IMR-90 (cell line): ENCODE measurements at regions of chr4 and their contacts with region 1.

Region 1: GRCh38 chr4:150010525-150011126 is 67.6 kb upstream of the DCLK2 start:
- DNase-seq: peak; percentile 72
- ATAC-seq: peak; percentile 77
- H3K4me3 ChIP-seq: no peak overlapping the region
- H3K27ac ChIP-seq: no peak overlapping the region
- H3K4me1 ChIP-seq: peaks cover 12% of the 10 kb centered on the region
- H3K27me3 ChIP-seq: no peaks in the 10 kb centered on the region
- CTCF ChIP-seq: peak; percentile 57
- POLR2A ChIP-seq: no peak
- RAD21 ChIP-seq: peak; percentile 66

Region 2: DNA sequence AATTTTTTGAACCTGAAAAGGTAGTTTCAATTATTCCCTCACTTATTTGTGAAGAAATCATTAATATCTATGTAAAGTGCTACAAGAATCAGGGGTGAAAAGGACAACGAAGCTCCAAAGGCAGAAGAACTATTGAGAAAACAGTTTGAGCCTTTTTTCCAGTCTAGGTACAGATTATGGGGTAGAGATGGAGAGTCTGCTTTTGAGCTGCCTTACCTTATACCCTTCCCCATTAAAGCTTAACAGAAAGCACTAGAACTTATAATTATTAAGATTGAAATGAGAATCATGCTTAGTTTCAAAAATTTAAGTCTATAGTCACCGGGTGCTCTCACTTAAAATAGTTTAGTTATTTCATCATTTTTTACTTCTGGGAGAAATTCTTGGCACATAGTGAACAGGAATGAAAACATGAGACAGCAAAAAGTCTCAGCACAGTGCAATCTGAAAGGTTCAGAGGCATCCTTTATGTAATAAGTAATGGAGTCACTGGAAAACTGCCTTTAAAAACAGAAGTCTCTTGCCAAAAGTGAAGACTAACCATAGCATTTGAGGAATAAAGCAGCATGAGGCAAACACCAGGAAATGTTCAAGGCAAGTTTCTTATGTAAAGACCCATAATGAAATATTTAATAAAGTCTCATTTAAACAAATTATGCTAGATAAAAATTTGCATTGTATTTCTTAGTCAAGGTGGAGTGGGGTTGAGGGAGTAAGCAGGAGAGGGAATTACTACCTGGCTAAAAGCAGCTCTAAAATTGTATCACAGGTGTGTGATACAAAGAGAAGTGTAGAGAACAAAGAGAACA is 62.5 kb after region 1 on chr4:
- CTCF ChIA-PET with region 1: no interaction called
- POLR2A ChIA-PET with region 1: no interaction called
- dilution Hi-C with region 1: no loop called
- in situ Hi-C with region 1: loop called (anchors 5 kb)
- intact Hi-C with region 1: loop called (anchors 5 kb)
- DNase-seq: peak; percentile 97
- ATAC-seq: peak; percentile 53
- H3K4me3 ChIP-seq: no peak overlapping the region
- H3K27ac ChIP-seq: peak overlapping the region; percentile 61; the same call in 1 of the 2 replicates
- H3K4me1 ChIP-seq: peaks cover 5% of the 10 kb centered on the region; the same call in 1 of the 2 replicates
- H3K27me3 ChIP-seq: no peaks in the 10 kb centered on the region
- CTCF ChIP-seq: no peak
- POLR2A ChIP-seq: no peak
- RAD21 ChIP-seq: no peak

Region 3: DNA sequence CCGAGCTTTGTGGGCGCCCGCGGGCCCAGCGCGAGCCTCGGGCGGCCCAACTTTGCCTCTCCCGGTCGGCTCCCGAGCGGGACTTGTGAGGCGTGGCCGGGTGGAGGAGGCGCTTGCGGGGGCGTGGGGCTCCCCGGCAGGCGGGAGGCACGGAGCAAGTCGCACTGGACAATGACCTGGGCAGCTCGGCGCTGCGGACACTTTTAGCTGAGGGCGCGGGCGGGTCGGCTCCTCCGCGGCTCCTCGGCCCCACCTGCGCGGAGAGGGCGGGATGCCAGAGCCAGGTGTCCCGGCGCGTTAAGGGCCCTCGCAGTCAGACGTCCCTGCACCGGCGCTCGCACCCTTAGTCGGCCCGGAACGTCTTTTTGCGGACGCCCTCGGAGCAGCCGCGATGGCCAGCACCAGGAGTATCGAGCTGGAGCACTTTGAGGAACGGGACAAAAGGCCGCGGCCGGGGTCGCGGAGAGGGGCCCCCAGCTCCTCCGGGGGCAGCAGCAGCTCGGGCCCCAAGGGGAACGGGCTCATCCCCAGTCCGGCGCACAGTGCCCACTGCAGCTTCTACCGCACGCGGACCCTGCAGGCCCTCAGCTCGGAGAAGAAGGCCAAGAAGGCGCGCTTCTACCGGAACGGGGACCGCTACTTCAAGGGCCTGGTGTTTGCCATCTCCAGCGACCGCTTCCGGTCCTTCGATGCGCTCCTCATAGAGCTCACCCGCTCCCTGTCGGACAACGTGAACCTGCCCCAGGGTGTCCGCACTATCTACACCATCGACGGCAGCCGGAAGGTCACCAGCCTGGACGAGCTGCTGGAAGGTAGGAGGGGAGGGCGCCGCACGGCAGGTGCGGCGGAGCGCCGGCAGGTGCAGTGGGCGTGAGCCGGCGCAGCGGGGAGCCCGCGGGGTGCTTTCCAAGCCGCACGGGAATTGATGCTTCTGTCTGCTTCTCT is 68.3 kb after region 1 on chr4:
- CTCF ChIA-PET with region 1: no interaction called
- POLR2A ChIA-PET with region 1: no interaction called
- dilution Hi-C with region 1: no loop called
- in situ Hi-C with region 1: loop called (anchors 5 kb)
- intact Hi-C with region 1: loop called (anchors 5 kb)
- DNase-seq: peak; percentile 46
- ATAC-seq: peak; percentile 75
- H3K4me3 ChIP-seq: peak overlapping the region; percentile 78
- H3K27ac ChIP-seq: peak overlapping the region; percentile 69
- H3K4me1 ChIP-seq: no peaks in the 10 kb centered on the region
- H3K27me3 ChIP-seq: no peaks in the 10 kb centered on the region
- CTCF ChIP-seq: 0 out of 2 replicates have a peak, but pooled peaks have one; percentile 14
- POLR2A ChIP-seq: no peak
- RAD21 ChIP-seq: peak; percentile 9; the same call in 1 of the 2 replicates

Region 4: DNA sequence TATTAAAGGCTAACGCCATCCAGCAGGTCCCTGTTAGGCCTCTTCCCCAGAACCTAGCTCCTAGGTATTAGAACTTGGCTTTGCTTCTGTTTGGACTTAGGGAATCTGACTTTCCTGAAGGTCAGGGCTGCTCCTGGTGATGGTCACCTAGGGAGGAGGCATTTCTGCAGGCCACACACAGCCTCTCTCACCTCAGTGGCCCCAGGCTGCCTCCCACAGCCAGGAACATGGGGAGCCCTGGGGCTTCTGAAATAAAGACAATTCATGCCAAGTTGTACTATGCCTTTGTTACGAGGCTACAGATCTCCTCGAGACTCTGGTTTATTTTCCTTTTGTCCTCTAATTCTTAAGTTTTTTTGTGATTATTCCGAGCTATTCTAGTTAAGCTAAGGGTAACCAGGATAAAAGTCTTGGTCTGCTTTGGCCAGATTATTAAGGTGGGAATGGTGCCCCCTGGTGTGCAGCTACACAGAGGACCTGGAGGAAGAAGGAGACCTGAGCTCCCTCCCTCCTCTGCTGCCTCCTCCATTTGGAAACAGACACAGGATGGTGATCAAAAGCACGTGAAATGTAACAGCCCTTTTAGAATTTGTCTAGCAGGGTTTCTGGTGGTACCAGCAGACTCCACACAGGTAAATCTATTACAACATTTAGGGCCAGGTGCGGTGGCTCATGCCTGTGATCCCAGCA is 198.7 kb after region 1 on chr4:
- CTCF ChIA-PET with region 1: interaction called, 19 read pairs
- POLR2A ChIA-PET with region 1: no interaction called
- dilution Hi-C with region 1: no loop called
- in situ Hi-C with region 1: loop called (anchors 10 kb)
- intact Hi-C with region 1: loop called (anchors 1 kb)
- DNase-seq: peak; percentile 71
- ATAC-seq: peak; percentile 77
- H3K4me3 ChIP-seq: no peak overlapping the region
- H3K27ac ChIP-seq: no peak overlapping the region
- H3K4me1 ChIP-seq: peaks cover 7% of the 10 kb centered on the region
- H3K27me3 ChIP-seq: no peaks in the 10 kb centered on the region
- CTCF ChIP-seq: peak; percentile 64
- POLR2A ChIP-seq: no peak
- RAD21 ChIP-seq: peak; percentile 73

Region 5: GRCh38 chr4:150217192-150217591 is 206.6 kb after region 1 on chr4:
- CTCF ChIA-PET with region 1: interaction called, 6 read pairs
- POLR2A ChIA-PET with region 1: no interaction called
- dilution Hi-C with region 1: no loop called
- in situ Hi-C with region 1: loop called (anchors 10 kb)
- intact Hi-C with region 1: no loop called
- DNase-seq: peak; percentile 87
- ATAC-seq: peak; percentile 87
- H3K4me3 ChIP-seq: no peak overlapping the region
- H3K27ac ChIP-seq: peak overlapping the region; percentile 21; the same call in 1 of the 2 replicates
- H3K4me1 ChIP-seq: peaks cover 8% of the 10 kb centered on the region
- H3K27me3 ChIP-seq: no peaks in the 10 kb centered on the region
- CTCF ChIP-seq: peak; percentile 50
- POLR2A ChIP-seq: no peak
- RAD21 ChIP-seq: peak; percentile 64